MCF 10A (cell line): ENCODE measurements at regions of chr9 and their contacts with region 1.

Region 1: GRCh38 chr9:77433675-77434445 is 214.3 kb downstream of the GNA14 start:
- DNase-seq: peak; percentile 61
- H3K4me3 Mint-ChIP-seq: no peak overlapping the region
- H3K27ac Mint-ChIP-seq: no peak overlapping the region
- H3K4me1 Mint-ChIP-seq: peaks cover 4% of the 10 kb centered on the region
- H3K27me3 Mint-ChIP-seq: no peaks in the 10 kb centered on the region
- CTCF ChIP-seq: peak; percentile 98

Region 2: GRCh38 chr9:77291714-77292113 is 142.1 kb before region 1 on chr9:
- CTCF ChIA-PET with region 1: interaction called, 16 read pairs
- POLR2A ChIA-PET with region 1: no interaction called
- intact Hi-C with region 1: loop called (anchors 5 kb)
- DNase-seq: peak; percentile 65
- H3K4me3 Mint-ChIP-seq: no peak overlapping the region
- H3K27ac Mint-ChIP-seq: peak overlapping the region; percentile 2
- H3K4me1 Mint-ChIP-seq: peaks cover 19% of the 10 kb centered on the region
- H3K27me3 Mint-ChIP-seq: no peaks in the 10 kb centered on the region
- CTCF ChIP-seq: peak; percentile 53

Region 3: GRCh38 chr9:77449255-77450039 is 15.6 kb after region 1 on chr9:
- CTCF ChIA-PET with region 1: interaction called, 121 read pairs
- POLR2A ChIA-PET with region 1: no interaction called
- intact Hi-C with region 1: no loop called
- DNase-seq: peak; percentile 70
- H3K4me3 Mint-ChIP-seq: no peak overlapping the region
- H3K27ac Mint-ChIP-seq: peak overlapping the region; percentile 43
- H3K4me1 Mint-ChIP-seq: peaks cover 13% of the 10 kb centered on the region
- H3K27me3 Mint-ChIP-seq: no peaks in the 10 kb centered on the region
- CTCF ChIP-seq: no peak

Region 4: DNA sequence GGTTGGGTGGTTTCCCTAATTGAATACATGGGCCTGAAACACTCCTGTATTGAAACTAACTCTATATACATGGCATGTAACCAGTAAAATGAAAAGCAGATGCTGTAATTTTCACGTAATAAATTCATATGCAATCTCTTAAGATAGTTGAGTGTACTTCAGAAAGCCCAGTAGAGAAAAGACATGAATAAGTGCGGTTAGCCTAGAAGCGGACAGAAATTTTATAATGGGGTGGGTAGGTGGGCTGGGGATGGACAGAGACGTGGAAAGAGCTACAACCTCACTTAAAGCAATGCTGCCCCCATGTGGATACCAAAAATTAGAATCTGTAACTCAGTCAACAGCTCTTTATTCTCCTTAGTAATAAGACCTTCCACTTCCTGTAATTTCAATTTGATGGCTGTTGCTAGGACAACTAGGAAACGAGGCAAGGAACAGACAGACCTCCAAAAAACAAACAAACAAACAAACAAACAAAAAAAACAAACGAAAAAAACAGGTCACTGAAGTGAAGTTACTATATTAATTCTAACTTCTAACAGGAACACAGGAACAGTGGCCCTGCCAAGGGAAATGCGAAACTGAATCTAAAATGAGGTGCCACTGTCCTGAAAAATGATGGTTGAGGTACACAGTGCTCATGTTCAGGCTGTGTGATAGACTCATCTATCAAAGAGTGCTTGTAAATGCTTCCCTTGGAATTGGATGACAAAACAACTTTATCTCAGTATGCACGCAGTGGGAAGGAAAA is 317.7 kb after region 1 on chr9:
- CTCF ChIA-PET with region 1: interaction called, 91 read pairs
- POLR2A ChIA-PET with region 1: interaction called, 5 read pairs
- intact Hi-C with region 1: loop called (anchors 1 kb)
- DNase-seq: peak; percentile 58
- H3K4me3 Mint-ChIP-seq: no peak overlapping the region
- H3K27ac Mint-ChIP-seq: no peak overlapping the region
- H3K4me1 Mint-ChIP-seq: peaks cover 16% of the 10 kb centered on the region
- H3K27me3 Mint-ChIP-seq: no peaks in the 10 kb centered on the region
- CTCF ChIP-seq: peak; percentile 39